CD4-positive, alpha-beta memory T cell (primary cell): ENCODE measurements at regions of chr12 and their contacts with region 1.

Region 1: GRCh38 chr12:123365025-123365917 is 624 bp upstream of the SBNO1 start:
- DNase-seq: peak; percentile 98 to 99 (median 99)
- H3K4me3 ChIP-seq: peak overlapping the region; percentile 92 to 94
- H3K4me3 Mint-ChIP-seq: peak overlapping the region; percentile 85 to 96 (median 94)
- H3K27ac ChIP-seq: peak overlapping the region; percentile 85
- H3K27ac Mint-ChIP-seq: peak overlapping the region; percentile 89 to 99 (median 97)
- H3K4me1 ChIP-seq: peaks cover 32% of the 10 kb centered on the region
- H3K4me1 Mint-ChIP-seq: peaks cover 10 to 32% (median 18%) of the 10 kb centered on the region in 4 donors
- H3K27me3 ChIP-seq: no peaks in the 10 kb centered on the region
- H3K27me3 Mint-ChIP-seq: no peaks in the 10 kb centered on the region

Region 2: DNA sequence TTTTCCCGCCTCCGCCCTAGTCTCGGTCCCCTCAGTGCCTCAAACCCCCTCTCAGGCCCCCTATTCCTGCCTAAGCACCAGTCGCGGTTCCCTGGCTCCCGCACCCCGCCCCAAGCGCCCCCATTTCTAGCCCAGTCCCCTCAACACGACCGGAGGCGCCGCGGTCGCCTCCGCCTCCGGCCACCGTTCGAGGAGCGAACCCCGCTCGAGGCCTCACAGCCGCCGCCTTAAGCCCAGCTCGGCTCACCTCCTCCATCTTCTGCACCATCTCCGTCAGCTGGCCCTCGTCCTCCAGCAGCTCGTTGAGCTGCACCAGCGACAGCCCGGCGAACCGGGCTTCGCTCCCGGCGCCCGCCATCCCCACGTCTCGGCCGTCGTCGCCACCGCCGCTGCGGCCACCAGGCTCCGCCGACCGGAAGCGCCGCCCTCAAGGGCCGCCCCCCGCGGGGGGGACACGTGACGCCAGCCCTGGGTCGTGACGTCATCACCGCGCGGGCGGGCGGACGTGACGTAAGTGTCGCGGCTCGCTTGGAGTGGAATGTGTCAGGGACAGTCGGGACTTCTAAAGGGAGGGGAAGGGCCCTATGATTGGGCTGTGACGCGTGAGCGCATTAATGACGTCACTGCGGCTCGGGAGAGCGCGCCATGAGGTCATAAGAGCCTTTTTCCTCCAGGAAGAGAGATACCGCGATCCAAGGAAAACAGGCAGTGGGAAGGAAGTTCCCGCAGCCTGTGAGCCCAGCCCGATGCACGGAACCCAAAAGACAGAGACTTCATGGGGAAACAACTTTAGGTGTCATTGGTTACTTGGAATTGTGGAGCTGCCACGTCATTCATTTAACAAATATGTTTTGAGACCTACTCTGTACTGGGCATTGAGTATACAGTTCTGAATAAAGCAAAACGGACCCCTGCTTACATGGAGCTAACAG is 469.3 kb before region 1 on chr12 and contains the start of gene VPS37B:
- CTCF ChIA-PET with region 1: no interaction called
- POLR2A ChIA-PET with region 1: no interaction called
- intact Hi-C with region 1: loop called (anchors 10 kb)
- DNase-seq: peak; percentile 91 to 96 (median 93)
- H3K4me3 ChIP-seq: peak within 1 kb of the TSS; percentile 54 to 79
- H3K4me3 Mint-ChIP-seq: peak within 1 kb of the TSS; percentile 88 to 97 (median 92)
- H3K27ac ChIP-seq: peak within 1 kb of the TSS; percentile 86
- H3K27ac Mint-ChIP-seq: peak within 1 kb of the TSS; percentile 93 to 100 (median 100)
- H3K4me1 ChIP-seq: peaks cover 89% of the 10 kb centered on the region
- H3K4me1 Mint-ChIP-seq: peaks cover 60 to 92% (median 78%) of the 10 kb centered on the region in 4 donors
- H3K27me3 ChIP-seq: no peaks in the 10 kb centered on the region
- H3K27me3 Mint-ChIP-seq: no peaks in the 10 kb centered on the region
- total RNA-seq, gene VPS37B: 22.8 to 23.7 TPM

Region 3: GRCh38 chr12:123337070-123337469 is 28.2 kb before region 1 on chr12:
- CTCF ChIA-PET with region 1: interaction called, 14 read pairs
- POLR2A ChIA-PET with region 1: interaction called, 4 read pairs
- intact Hi-C with region 1: no loop called
- DNase-seq: no peak
- H3K4me3 ChIP-seq: no peak overlapping the region
- H3K4me3 Mint-ChIP-seq: no peak overlapping the region
- H3K27ac ChIP-seq: no peak overlapping the region
- H3K27ac Mint-ChIP-seq: peak overlapping the region in 5 of 7 donors; percentile 1 to 77 (median 32)
- H3K4me1 ChIP-seq: no peaks in the 10 kb centered on the region
- H3K4me1 Mint-ChIP-seq: peaks cover 11 to 31% (median 17%) of the 10 kb centered on the region in 4 donors
- H3K27me3 ChIP-seq: no peaks in the 10 kb centered on the region
- H3K27me3 Mint-ChIP-seq: no peaks in the 10 kb centered on the region

Region 4: DNA sequence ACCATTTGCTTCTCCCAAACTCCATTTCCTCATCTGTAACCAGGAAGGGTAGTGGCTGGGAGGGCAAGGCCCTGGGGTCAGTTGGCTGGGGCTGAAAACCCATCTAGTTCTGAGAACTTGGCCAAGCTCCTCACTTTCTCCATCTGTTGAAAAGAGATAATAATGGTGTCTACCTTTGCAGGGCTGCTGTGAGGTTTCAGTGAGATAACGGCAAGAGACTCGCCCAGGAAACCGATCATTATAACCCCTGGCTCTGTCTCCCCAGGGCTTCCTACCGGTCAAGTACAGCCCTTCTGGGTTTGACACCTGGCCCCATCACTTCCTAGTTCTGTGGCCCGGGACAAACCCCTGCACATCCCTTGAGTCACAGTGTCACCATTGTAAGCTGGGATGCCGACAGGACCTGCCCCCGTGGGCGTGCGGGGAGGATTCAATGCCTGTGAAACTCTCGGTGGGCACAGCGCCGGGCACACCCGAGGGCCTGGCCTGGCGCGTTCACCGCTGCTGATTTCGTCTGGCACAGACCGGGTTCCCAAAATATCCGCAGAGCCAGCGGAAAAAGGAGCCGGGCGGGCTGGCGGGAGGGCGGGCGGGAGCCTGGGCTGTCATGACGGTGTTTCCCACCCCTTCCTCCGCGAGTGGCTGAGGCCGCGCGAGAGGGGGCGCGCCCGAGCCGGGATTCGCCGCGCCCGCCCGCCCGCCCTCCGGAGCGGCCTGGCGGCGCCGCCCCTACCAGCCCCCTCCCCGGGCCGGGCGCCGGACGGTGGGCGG is 23.1 kb after region 1 on chr12:
- CTCF ChIA-PET with region 1: interaction called, 24 read pairs
- POLR2A ChIA-PET with region 1: interaction called, 113 read pairs
- intact Hi-C with region 1: loop called (anchors 1 kb)
- DNase-seq: peak; percentile 76 to 85 (median 79)
- H3K4me3 ChIP-seq: peak overlapping the region; percentile 71 to 84
- H3K4me3 Mint-ChIP-seq: peak overlapping the region; percentile 86 to 92 (median 88)
- H3K27ac ChIP-seq: peak overlapping the region; percentile 70
- H3K27ac Mint-ChIP-seq: peak overlapping the region; percentile 85 to 96 (median 92)
- H3K4me1 ChIP-seq: peaks cover 45% of the 10 kb centered on the region
- H3K4me1 Mint-ChIP-seq: peaks cover 18 to 57% (median 45%) of the 10 kb centered on the region in 4 donors
- H3K27me3 ChIP-seq: no peaks in the 10 kb centered on the region
- H3K27me3 Mint-ChIP-seq: no peaks in the 10 kb centered on the region

Region 5: GRCh38 chr12:123457980-123458783 is 92.9 kb after region 1 on chr12 and contains the start of gene SNRNP35:
- CTCF ChIA-PET with region 1: interaction called, 10 read pairs
- POLR2A ChIA-PET with region 1: interaction called, 37 read pairs
- intact Hi-C with region 1: loop called (anchors 1 kb)
- DNase-seq: peak; percentile 87 to 91 (median 89)
- H3K4me3 ChIP-seq: peak within 1 kb of the TSS; percentile 58 to 95
- H3K4me3 Mint-ChIP-seq: peak within 1 kb of the TSS; percentile 97 to 100 (median 100)
- H3K27ac ChIP-seq: peak within 1 kb of the TSS; percentile 95
- H3K27ac Mint-ChIP-seq: peak within 1 kb of the TSS; percentile 98 to 100 (median 100)
- H3K4me1 ChIP-seq: peaks cover 26% of the 10 kb centered on the region
- H3K4me1 Mint-ChIP-seq: peaks cover 19 to 37% (median 29%) of the 10 kb centered on the region in 4 donors
- H3K27me3 ChIP-seq: no peaks in the 10 kb centered on the region
- H3K27me3 Mint-ChIP-seq: no peaks in the 10 kb centered on the region
- total RNA-seq, gene SNRNP35: 44.0 to 49.5 TPM

Region 6: GRCh38 chr12:123580772-123581171 is 215.5 kb after region 1 on chr12:
- CTCF ChIA-PET with region 1: interaction called, 3 read pairs
- POLR2A ChIA-PET with region 1: no interaction called
- intact Hi-C with region 1: loop called (anchors 1 kb)
- DNase-seq: no peak
- H3K4me3 ChIP-seq: no peak overlapping the region
- H3K4me3 Mint-ChIP-seq: peak overlapping the region in 1 of 8 donors; percentile 31
- H3K27ac ChIP-seq: no peak overlapping the region
- H3K27ac Mint-ChIP-seq: peak overlapping the region in 2 of 7 donors; percentile 48 to 97
- H3K4me1 ChIP-seq: peaks cover 26% of the 10 kb centered on the region
- H3K4me1 Mint-ChIP-seq: peaks cover 13 to 44% (median 26%) of the 10 kb centered on the region in 4 donors
- H3K27me3 ChIP-seq: no peaks in the 10 kb centered on the region
- H3K27me3 Mint-ChIP-seq: no peaks in the 10 kb centered on the region